ENCODE measurements at regions of chr12 and their contacts with region 1.

Region 1: DNA sequence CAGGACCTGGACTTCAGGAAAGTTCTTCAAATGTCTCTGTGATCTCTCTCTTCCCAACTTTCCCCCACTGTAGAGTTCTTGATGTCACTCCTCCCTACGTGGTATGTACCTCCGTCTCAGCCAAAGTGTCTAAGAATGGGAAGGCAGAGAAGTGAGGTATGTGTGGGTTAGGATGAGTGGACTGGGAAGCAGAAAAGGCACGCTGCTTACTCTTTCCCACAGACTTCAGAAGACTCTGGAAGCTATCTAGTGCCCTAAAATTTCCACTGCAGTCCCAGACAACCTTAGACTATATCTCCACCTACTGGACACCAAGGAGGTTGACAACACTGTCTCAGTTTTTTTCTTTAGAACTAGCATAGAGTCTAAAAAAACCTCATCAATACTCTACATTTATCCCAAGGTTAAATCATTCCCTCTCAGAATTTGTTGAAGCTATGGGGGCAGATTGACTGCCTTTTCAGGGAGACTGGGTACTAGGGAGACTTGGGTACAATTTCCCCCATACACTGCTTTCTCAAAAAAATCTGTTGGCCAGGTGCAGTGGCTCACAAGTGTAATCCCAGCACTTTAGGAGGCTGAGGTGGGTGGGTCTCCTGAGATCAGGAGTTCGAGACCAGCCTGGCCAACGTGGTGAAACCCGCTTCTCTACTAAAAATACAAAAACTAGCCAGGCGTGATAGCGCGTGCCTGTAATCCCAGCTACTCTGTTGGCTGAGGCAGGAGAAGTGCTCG is 20.6 kb upstream of the ITGA5 start:
- DNase-seq: peak; percentile 62 to 72 (median 66)
- H3K4me3 ChIP-seq: no peak overlapping the region
- H3K27ac ChIP-seq: no peak overlapping the region
- H3K4me1 ChIP-seq: peaks cover 0 to 13% (median 6%) of the 10 kb centered on the region in 4 experiments
- H3K27me3 ChIP-seq: no peaks in the 10 kb centered on the region

Region 2: DNA sequence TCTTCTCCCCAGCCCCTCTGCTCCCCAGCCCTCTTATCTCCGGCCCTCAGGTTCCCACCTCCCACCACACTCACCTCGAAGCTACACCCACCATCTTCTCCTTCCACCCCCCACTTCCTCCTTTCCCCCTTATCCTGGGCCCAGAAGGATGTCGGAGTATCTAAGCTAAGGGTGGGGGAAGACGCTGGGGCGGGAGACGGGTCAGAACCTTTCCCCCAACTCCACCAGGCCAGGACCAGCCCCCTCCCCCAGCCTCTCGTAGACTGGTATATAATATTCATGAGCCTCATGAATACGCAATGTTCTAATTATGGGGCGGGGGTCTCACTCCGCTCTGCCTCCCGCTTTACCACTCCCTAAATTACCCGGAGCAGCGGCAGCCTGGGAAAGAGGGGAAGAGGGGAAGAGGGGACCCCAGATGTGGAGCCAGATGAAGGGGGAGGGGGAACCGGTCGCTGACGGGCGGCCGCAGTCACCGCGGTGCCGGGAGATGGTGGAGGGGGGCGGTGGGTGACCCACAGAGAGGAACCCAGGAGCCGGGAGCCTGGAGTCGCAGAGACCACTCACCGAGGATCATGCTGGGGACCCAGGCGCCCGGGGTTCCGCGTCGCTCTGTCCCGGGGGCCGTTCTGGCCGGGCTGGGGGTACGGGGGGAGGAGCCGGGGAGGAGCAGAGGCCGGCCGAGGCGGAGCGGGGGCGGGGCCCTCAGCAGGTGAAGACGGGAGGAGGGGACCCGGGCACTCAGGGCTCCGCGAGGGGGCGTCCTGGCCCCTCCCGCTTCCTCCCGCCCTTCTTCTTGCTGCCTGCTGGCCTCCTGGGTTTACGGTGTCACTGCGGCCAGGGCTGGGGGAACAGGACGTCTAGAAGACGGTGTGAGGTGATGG is 48.8 kb before region 1 on chr12:
- CTCF ChIA-PET with region 1: interaction called, 630 read pairs
- POLR2A ChIA-PET with region 1: interaction called, 3 read pairs
- DNase-seq: peak; percentile 69 to 87 (median 80)
- H3K4me3 ChIP-seq: peak overlapping the region; percentile 42 to 79 (median 73)
- H3K27ac ChIP-seq: peak overlapping the region; percentile 15 to 73
- H3K4me1 ChIP-seq: peaks cover 3 to 86% (median 54%) of the 10 kb centered on the region in 4 experiments
- H3K27me3 ChIP-seq: no peaks in the 10 kb centered on the region

Region 3: GRCh38 chr12:54419088-54419892 is 20.4 kb before region 1 on chr12 and contains the start of gene ITGA5:
- CTCF ChIA-PET with region 1: interaction called, 351 read pairs
- POLR2A ChIA-PET with region 1: interaction called, 3 read pairs
- DNase-seq: peak in 1 of 3 donors; percentile 38
- H3K4me3 ChIP-seq: peak within 1 kb of the TSS; percentile 69 to 98 (median 90)
- H3K27ac ChIP-seq: peak within 1 kb of the TSS; percentile 86 to 97
- H3K4me1 ChIP-seq: peaks cover 18 to 77% (median 62%) of the 10 kb centered on the region in 4 experiments
- H3K27me3 ChIP-seq: no peaks in the 10 kb centered on the region

Region 4: DNA sequence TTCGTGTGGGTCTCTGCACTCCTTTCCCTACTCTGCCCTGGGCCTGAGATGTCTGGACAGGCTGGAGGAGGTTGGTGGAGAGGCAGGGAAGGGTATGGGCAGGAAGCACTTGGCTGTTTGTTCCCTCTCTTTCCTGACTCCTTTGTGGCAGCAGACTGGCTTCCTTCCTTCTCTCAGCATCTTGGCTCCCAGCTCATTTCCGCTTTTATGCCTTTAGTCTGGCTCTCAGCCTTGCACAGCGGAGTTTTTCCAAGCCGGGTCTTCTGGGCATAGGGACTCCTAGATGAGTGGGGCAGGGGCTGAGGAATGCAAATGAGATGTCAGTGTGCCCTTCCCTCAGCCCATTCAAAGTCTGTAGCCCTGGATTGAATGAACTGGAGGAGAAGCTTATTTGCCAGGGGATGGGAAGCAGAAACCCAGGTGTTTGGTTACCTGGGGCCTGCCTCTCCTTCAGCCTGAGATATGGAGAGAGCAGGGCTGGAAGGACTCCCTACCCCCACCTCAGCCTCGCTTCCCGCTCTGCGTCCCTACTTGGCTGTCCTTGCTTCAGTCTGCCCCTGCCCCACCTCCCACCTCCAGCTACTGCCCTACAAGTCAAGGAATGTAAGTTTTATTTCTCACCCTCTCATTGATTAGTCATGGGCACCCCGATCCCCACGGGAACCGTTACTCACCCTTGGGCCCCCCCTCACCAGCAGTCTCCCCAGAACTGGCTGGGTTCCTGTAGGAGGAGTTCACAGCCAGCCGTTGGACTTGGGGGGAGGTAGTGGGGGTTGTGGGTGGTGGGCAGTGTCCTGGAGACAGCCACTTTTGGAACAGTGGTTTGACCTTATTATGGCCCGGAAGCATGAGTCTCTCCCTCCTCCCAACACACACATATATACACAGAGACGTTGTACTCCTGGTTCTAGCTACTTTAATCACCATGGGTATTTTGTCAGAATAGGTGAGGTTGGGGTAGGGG is 11.4 kb before region 1 on chr12:
- CTCF ChIA-PET with region 1: interaction called, 88 read pairs
- POLR2A ChIA-PET with region 1: no interaction called
- DNase-seq: peak in 2 of 3 donors; percentile 61 to 74
- H3K4me3 ChIP-seq: peak overlapping the region in 4 of 7 experiments; percentile 1 to 44 (median 30)
- H3K27ac ChIP-seq: peak overlapping the region in 1 of 2 experiments; percentile 63
- H3K4me1 ChIP-seq: peaks cover 4 to 82% (median 55%) of the 10 kb centered on the region in 4 experiments
- H3K27me3 ChIP-seq: no peaks in the 10 kb centered on the region

Region 5: GRCh38 chr12:54522243-54522642 is 82.6 kb after region 1 on chr12:
- CTCF ChIA-PET with region 1: no interaction called
- POLR2A ChIA-PET with region 1: no interaction called
- DNase-seq: no peak
- H3K4me3 ChIP-seq: no peak overlapping the region
- H3K27ac ChIP-seq: no peak overlapping the region
- H3K4me1 ChIP-seq: no peaks in the 10 kb centered on the region
- H3K27me3 ChIP-seq: no peaks in the 10 kb centered on the region

Measured in common myeloid progenitor, CD34-positive (primary cell).